Uterus (tissue), 4 donors: ENCODE measurements at regions of chr12 and their contacts with region 1.

Region 1: GRCh38 chr12:54294152-54294952 is 6.5 kb downstream of the NFE2 start:
- DNase-seq: peak in 1 of 2 donors; percentile 32
- H3K4me3 ChIP-seq: no peak overlapping the region
- H3K27ac ChIP-seq: no peak overlapping the region
- H3K4me1 ChIP-seq: no peaks in the 10 kb centered on the region
- H3K27me3 ChIP-seq: no peaks in the 10 kb centered on the region
- CTCF ChIP-seq: peak; percentile 27 to 48 (median 44)
- POLR2A ChIP-seq: no peak

Region 2: GRCh38 chr12:54368709-54369583 is 74.6 kb after region 1 on chr12:
- intact Hi-C with region 1: loop called (anchors 10 kb)
- DNase-seq: peak; percentile 92 to 93
- H3K4me3 ChIP-seq: peak overlapping the region; percentile 31 to 37
- H3K27ac ChIP-seq: peak overlapping the region; percentile 65 to 70
- H3K4me1 ChIP-seq: no peaks in the 10 kb centered on the region
- H3K27me3 ChIP-seq: no peaks in the 10 kb centered on the region
- CTCF ChIP-seq: peak; percentile 84 to 92 (median 90)
- POLR2A ChIP-seq: no peak

Region 3: DNA sequence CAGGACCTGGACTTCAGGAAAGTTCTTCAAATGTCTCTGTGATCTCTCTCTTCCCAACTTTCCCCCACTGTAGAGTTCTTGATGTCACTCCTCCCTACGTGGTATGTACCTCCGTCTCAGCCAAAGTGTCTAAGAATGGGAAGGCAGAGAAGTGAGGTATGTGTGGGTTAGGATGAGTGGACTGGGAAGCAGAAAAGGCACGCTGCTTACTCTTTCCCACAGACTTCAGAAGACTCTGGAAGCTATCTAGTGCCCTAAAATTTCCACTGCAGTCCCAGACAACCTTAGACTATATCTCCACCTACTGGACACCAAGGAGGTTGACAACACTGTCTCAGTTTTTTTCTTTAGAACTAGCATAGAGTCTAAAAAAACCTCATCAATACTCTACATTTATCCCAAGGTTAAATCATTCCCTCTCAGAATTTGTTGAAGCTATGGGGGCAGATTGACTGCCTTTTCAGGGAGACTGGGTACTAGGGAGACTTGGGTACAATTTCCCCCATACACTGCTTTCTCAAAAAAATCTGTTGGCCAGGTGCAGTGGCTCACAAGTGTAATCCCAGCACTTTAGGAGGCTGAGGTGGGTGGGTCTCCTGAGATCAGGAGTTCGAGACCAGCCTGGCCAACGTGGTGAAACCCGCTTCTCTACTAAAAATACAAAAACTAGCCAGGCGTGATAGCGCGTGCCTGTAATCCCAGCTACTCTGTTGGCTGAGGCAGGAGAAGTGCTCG is 145.3 kb after region 1 on chr12:
- intact Hi-C with region 1: no loop called
- DNase-seq: no peak
- H3K4me3 ChIP-seq: no peak overlapping the region
- H3K27ac ChIP-seq: peak overlapping the region; percentile 26 to 44
- H3K4me1 ChIP-seq: no peaks in the 10 kb centered on the region
- H3K27me3 ChIP-seq: no peaks in the 10 kb centered on the region
- CTCF ChIP-seq: peak; percentile 79 to 94 (median 94)
- POLR2A ChIP-seq: no peak